Caco-2 (cell line): ENCODE measurements at regions of chr5 and their contacts with region 1.

Region 1: DNA sequence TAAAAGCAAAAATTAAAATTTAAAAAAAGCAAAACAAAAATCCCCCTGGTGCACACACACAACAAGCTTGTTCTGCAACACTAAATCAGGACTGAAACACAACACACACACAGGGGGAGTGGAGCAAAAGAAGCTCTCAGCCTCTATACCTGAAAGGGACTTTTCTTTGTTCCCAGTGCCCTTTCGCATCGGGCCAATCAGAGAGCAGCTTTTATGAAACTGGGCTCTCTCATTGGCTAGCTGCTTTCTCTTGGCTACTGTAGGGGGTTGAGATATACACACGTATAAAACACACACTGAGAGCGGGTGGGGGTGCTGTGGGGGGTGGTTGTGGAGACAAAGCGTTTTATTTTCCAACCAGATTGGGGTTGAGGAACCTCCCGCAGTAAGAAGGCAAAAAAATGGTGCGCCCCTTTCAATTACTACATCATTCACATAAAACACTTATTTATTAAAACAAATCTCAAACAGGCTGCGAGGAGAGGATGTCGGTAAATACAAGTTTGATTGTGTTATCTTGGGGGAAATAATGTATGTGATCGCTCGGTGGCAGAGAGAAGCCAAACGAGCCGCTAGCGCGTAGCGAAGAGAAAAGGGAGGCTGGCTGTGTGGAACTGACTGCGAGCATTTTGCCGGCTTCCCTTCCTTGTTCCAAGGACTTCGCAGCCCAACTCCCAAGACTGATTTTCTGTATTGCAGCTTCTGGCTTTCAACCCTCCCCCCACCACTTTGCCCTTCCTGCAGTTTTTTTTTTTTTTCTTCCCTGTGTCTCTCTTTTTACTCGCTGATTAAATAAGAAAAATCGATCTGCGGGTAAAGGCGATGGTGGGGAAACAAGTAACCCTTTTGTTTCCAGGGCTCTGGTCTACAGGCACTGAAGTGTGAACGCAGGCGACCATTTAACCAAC is 2.5 kb upstream of the ZNF608 start:
- DNase-seq: peak; percentile 89 to 95
- H3K4me3 ChIP-seq: peak overlapping the region; percentile 62
- H3K4me3 Mint-ChIP-seq: no peak overlapping the region
- H3K27ac Mint-ChIP-seq: peak overlapping the region; percentile 93
- H3K4me1 ChIP-seq: peaks cover 48% of the 10 kb centered on the region
- H3K4me1 Mint-ChIP-seq: peaks cover 12% of the 10 kb centered on the region
- H3K27me3 ChIP-seq: no peaks in the 10 kb centered on the region
- H3K27me3 Mint-ChIP-seq: no peaks in the 10 kb centered on the region
- CTCF ChIP-seq: no peak

Region 2: DNA sequence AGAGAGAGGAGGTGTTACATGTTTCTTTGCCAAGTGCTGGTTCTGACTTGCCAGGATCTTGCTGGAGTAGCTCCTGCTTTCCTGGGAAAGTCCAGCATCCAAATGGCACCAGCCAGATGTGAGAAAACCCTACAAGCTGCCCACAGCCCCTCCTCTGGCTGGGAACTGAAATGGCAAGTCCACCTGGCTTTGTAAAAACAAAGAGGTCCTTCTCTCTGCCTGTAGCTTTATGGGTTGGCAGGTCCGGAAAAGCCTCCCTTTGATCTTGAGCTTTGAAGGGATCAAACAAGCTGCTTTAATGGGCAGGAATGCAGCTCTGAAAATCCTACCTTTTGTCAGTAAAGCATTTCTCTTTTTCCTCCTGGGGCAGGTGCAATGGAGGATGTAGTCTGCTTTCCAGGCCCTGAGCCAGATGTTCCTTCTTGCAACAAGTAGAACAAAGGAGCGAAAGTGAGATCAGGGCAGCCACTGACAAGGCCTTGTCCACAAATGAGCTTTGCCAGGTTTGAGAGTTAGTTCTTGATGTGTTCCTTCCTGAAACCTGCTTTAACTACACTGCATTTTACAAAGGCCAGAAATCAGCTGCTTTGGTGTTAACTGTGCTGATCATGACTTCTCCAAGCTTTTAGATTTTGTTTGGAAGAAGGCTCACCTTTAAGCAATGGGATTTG is 459.2 kb before region 1 on chr5:
- CTCF ChIA-PET with region 1: no interaction called
- POLR2A ChIA-PET with region 1: no interaction called
- intact Hi-C with region 1: loop called (anchors 5 kb)
- DNase-seq: peak; percentile 76 to 78
- H3K4me3 ChIP-seq: no peak overlapping the region
- H3K4me3 Mint-ChIP-seq: no peak overlapping the region
- H3K27ac Mint-ChIP-seq: peak overlapping the region; percentile 13
- H3K4me1 ChIP-seq: peaks cover 21% of the 10 kb centered on the region; the same call in 1 of the 2 replicates
- H3K4me1 Mint-ChIP-seq: peaks cover 18% of the 10 kb centered on the region
- H3K27me3 ChIP-seq: no peaks in the 10 kb centered on the region
- H3K27me3 Mint-ChIP-seq: no peaks in the 10 kb centered on the region
- CTCF ChIP-seq: peak; percentile 20 to 42

Region 3: GRCh38 chr5:124463851-124464250 is 285.1 kb before region 1 on chr5:
- CTCF ChIA-PET with region 1: no interaction called
- POLR2A ChIA-PET with region 1: no interaction called
- intact Hi-C with region 1: no loop called
- DNase-seq: no peak
- H3K4me3 ChIP-seq: no peak overlapping the region
- H3K4me3 Mint-ChIP-seq: no peak overlapping the region
- H3K27ac Mint-ChIP-seq: no peak overlapping the region
- H3K4me1 ChIP-seq: no peaks in the 10 kb centered on the region
- H3K4me1 Mint-ChIP-seq: no peaks in the 10 kb centered on the region
- H3K27me3 ChIP-seq: no peaks in the 10 kb centered on the region
- H3K27me3 Mint-ChIP-seq: no peaks in the 10 kb centered on the region
- CTCF ChIP-seq: no peak

Region 4: GRCh38 chr5:124637011-124637410 is 111.9 kb before region 1 on chr5:
- CTCF ChIA-PET with region 1: interaction called, 3 read pairs
- POLR2A ChIA-PET with region 1: interaction called, 19 read pairs
- intact Hi-C with region 1: no loop called
- DNase-seq: no peak
- H3K4me3 ChIP-seq: no peak overlapping the region
- H3K4me3 Mint-ChIP-seq: no peak overlapping the region
- H3K27ac Mint-ChIP-seq: no peak overlapping the region
- H3K4me1 ChIP-seq: peaks cover 28% of the 10 kb centered on the region
- H3K4me1 Mint-ChIP-seq: peaks cover 20% of the 10 kb centered on the region
- H3K27me3 ChIP-seq: no peaks in the 10 kb centered on the region
- H3K27me3 Mint-ChIP-seq: no peaks in the 10 kb centered on the region
- CTCF ChIP-seq: no peak

Region 5: DNA sequence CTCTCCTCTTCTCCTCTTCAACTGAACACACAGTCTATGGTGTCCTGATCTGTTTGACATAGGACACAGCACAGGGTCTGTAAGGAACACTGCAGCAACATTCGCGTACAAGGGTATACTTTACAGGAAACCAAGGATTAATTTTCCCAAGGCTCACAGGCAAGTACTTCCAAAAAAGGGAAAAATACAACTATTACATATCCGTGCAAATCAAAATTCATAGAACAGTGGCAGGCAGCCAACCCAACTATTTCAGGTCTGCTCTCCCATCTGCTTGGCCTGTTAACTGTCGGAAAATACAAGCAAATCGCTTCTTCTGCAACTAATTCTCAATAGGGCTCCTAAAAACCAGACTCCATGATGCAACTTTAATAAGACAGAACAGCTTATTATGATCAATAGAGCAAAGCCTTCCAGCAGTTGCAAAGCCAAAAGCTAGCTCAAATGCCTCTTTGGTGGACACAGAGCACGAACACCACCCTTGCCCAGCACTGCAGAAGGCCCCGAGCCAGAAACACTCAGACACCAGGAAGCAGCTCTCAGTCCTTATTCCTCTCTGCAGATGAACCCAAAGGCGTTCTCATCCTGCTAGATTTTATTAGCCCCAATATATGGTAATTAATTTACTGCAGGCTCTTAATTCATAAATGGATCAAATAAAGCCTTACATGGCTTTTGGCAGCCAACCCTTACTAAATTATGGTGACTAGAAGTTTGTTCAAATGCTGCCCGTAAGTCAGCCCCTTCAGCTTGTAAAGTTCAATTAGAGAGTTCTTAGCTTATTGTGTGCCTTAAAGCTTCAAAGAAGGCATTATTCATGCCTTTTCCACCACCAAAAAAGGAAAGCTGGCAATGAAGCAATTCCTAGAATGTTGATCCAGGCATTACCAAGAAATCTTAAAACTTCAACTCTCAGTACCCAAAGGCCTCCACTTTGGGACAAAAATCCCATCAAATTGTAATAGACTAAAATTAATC is 71.3 kb before region 1 on chr5:
- CTCF ChIA-PET with region 1: no interaction called
- POLR2A ChIA-PET with region 1: interaction called, 27 read pairs
- intact Hi-C with region 1: no loop called
- DNase-seq: no peak
- H3K4me3 ChIP-seq: no peak overlapping the region
- H3K4me3 Mint-ChIP-seq: no peak overlapping the region
- H3K27ac Mint-ChIP-seq: peak overlapping the region; percentile 37
- H3K4me1 ChIP-seq: peaks cover 59% of the 10 kb centered on the region
- H3K4me1 Mint-ChIP-seq: peaks cover 42% of the 10 kb centered on the region
- H3K27me3 ChIP-seq: no peaks in the 10 kb centered on the region
- H3K27me3 Mint-ChIP-seq: no peaks in the 10 kb centered on the region
- CTCF ChIP-seq: no peak

Region 6: DNA sequence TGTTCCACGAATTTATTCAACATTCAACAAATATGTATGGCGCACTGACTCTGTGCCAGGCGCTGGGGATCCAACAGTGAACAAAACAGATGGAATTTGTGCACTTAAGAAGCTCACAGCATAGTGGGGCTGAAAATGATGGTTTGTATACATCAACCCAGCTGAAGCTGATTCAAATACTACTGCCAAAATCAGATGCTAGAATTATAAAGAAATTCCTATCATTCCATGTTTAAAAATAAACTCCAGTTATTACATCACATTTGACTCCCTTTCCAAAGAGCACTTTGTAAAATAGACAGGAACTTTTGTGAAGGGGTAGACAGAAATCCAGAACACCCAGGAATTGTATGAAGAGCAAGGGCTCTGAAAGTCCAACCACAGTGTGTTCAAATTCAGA is 56.6 kb before region 1 on chr5:
- CTCF ChIA-PET with region 1: no interaction called
- POLR2A ChIA-PET with region 1: no interaction called
- intact Hi-C with region 1: no loop called
- DNase-seq: no peak
- H3K4me3 ChIP-seq: no peak overlapping the region
- H3K4me3 Mint-ChIP-seq: no peak overlapping the region
- H3K27ac Mint-ChIP-seq: no peak overlapping the region
- H3K4me1 ChIP-seq: no peaks in the 10 kb centered on the region
- H3K4me1 Mint-ChIP-seq: no peaks in the 10 kb centered on the region
- H3K27me3 ChIP-seq: no peaks in the 10 kb centered on the region
- H3K27me3 Mint-ChIP-seq: no peaks in the 10 kb centered on the region
- CTCF ChIP-seq: no peak

Region 7: GRCh38 chr5:124996764-124997077 is 247.8 kb after region 1 on chr5:
- CTCF ChIA-PET with region 1: no interaction called
- POLR2A ChIA-PET with region 1: no interaction called
- intact Hi-C with region 1: loop called (anchors 2 kb)
- DNase-seq: peak in 1 of 2 experiments; percentile 59
- H3K4me3 ChIP-seq: no peak overlapping the region
- H3K4me3 Mint-ChIP-seq: peak overlapping the region; percentile 52
- H3K27ac Mint-ChIP-seq: peak overlapping the region; percentile 93
- H3K4me1 ChIP-seq: peaks cover 49% of the 10 kb centered on the region
- H3K4me1 Mint-ChIP-seq: peaks cover 39% of the 10 kb centered on the region
- H3K27me3 ChIP-seq: no peaks in the 10 kb centered on the region; the same call in 1 of the 2 replicates
- H3K27me3 Mint-ChIP-seq: no peaks in the 10 kb centered on the region
- CTCF ChIP-seq: no peak

Region 8: GRCh38 chr5:125209650-125210049 is 460.7 kb after region 1 on chr5:
- CTCF ChIA-PET with region 1: no interaction called
- POLR2A ChIA-PET with region 1: no interaction called
- intact Hi-C with region 1: no loop called
- DNase-seq: no peak
- H3K4me3 ChIP-seq: no peak overlapping the region
- H3K4me3 Mint-ChIP-seq: no peak overlapping the region
- H3K27ac Mint-ChIP-seq: no peak overlapping the region
- H3K4me1 ChIP-seq: no peaks in the 10 kb centered on the region
- H3K4me1 Mint-ChIP-seq: no peaks in the 10 kb centered on the region
- H3K27me3 ChIP-seq: no peaks in the 10 kb centered on the region
- H3K27me3 Mint-ChIP-seq: no peaks in the 10 kb centered on the region
- CTCF ChIP-seq: no peak

Region 9: GRCh38 chr5:126594676-126595485 is 1845.9 kb after region 1 on chr5 and contains the start of gene ALDH7A1:
- CTCF ChIA-PET with region 1: no interaction called
- POLR2A ChIA-PET with region 1: interaction called, 15 read pairs
- intact Hi-C with region 1: no loop called
- DNase-seq: peak; percentile 97 to 98
- H3K4me3 ChIP-seq: peak within 1 kb of the TSS; percentile 66
- H3K4me3 Mint-ChIP-seq: peak within 1 kb of the TSS; percentile 93
- H3K27ac Mint-ChIP-seq: peak within 1 kb of the TSS; percentile 91
- H3K4me1 ChIP-seq: peaks cover 20% of the 10 kb centered on the region
- H3K4me1 Mint-ChIP-seq: peaks cover 22% of the 10 kb centered on the region
- H3K27me3 ChIP-seq: no peaks in the 10 kb centered on the region
- H3K27me3 Mint-ChIP-seq: no peaks in the 10 kb centered on the region
- CTCF ChIP-seq: peak; percentile 27 to 77
- total RNA-seq, gene ALDH7A1: 192 and 204 TPM in 2 replicates